Gastrocnemius medialis (tissue), 4 donors: ENCODE measurements at regions of chr1 and their contacts with region 1.

Region 1: GRCh38 chr1:154485106-154485505 is 16.9 kb upstream of the TDRD10 start:
- DNase-seq: peak in 1 of 2 donors; percentile 39
- ATAC-seq: peak; percentile 62 to 80
- H3K4me3 ChIP-seq: no peak overlapping the region
- H3K27ac ChIP-seq: peak overlapping the region; percentile 32 to 74 (median 57)
- H3K4me1 ChIP-seq: peaks cover 8 to 28% of the 10 kb centered on the region in 2 donors
- H3K27me3 ChIP-seq: no peaks in the 10 kb centered on the region
- CTCF ChIP-seq: no peak
- POLR2A ChIP-seq: no peak

Region 2: DNA sequence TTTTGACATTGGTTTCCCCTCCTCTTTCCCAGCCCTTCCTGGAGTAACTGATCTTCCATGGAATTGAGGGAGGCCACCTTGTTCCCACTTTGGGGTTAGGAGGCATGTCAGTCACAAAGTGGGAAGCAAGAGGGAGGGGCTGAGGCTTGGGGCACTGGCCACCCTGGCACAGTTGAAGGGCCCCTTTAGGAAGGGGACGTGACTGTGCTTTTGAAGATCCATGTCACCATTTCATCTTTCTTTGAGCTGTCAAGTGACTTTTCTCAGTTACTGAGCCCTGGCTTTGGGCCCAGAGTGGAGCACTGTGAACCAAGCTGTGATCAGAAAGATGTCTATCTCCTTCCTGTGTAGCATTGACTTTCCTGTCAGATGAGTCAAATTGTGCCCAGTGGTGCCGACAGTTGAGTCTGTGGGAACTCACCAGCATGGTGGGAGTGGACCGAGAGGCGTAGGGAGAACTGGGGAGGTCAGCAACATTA is 21.6 kb before region 1 on chr1:
- in situ Hi-C with region 1: no loop called
- intact Hi-C with region 1: no loop called
- DNase-seq: no peak
- ATAC-seq: peak in 1 of 2 donors; percentile 23
- H3K4me3 ChIP-seq: no peak overlapping the region
- H3K27ac ChIP-seq: peak overlapping the region; percentile 28 to 49 (median 38)
- H3K4me1 ChIP-seq: peaks cover 0 to 4% of the 10 kb centered on the region in 2 donors
- H3K27me3 ChIP-seq: no peaks in the 10 kb centered on the region
- CTCF ChIP-seq: no peak
- POLR2A ChIP-seq: no peak

Region 3: GRCh38 chr1:154520333-154520732 is 35.2 kb after region 1 on chr1:
- in situ Hi-C with region 1: no loop called
- intact Hi-C with region 1: loop called (anchors 5 kb)
- DNase-seq: no peak
- ATAC-seq: peak in 1 of 2 donors; percentile 26
- H3K4me3 ChIP-seq: no peak overlapping the region
- H3K27ac ChIP-seq: no peak overlapping the region
- H3K4me1 ChIP-seq: peaks cover 0 to 5% of the 10 kb centered on the region in 2 donors
- H3K27me3 ChIP-seq: no peaks in the 10 kb centered on the region
- CTCF ChIP-seq: no peak
- POLR2A ChIP-seq: no peak